ENCODE measurements at regions of chr22 and their contacts with region 1.

Region 1: DNA sequence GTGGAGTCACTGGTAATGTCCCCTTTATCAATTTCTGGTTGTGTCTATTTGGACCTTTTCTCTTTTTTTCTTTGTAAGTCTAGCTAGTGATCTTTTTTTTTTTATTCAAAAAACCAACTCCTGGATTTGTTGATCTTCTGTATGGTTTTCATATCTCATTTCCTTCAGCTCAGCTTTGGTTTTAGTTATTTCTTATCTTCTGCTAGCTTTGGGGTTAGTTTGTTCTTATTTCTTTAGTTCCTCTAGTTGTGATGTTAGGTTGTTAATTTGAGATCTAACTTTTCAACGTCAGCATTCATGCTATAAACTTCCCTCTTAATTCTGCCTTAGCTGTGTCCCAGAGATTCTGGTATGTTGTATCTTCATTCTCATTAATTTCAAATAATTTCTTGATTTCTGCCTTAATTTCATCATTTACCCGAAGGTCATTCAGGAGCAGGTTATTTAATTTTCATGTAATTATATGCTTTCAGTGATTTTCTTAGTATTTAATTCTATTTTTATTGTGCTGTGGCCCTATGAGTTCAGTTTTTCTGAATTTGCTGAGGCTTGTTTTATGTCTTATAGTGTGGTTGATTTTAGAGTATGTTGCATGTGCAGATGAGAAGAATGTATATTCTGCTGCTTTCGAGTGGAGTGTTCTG is 29.0 kb downstream of the PI4KA start:
- DNase-seq: no peak
- ATAC-seq: no peak

Region 2: DNA sequence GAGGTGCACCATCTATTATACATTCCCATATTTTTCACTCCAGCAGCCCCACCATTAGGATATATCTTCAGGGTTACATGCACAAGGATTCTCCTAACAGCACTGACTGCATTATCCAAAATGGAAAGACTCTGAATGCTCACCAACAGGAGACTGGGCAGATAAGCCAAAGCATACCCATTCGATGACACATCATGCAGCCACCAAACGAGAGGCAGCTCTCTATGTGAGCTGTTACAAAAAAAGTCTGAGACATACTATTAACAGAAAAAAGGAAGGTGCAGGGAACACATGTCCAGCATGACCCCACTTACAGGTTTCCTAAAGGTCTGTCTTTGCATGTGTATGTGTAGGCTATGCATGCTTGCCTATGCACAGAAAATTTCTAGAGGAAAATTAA is 68.1 kb before region 1 on chr22:
- intact Hi-C with region 1: loop called in 1 of 2 experiments (anchors 10 kb)
- DNase-seq: no peak
- ATAC-seq: peak in 1 of 2 donors; percentile 32

Region 3: GRCh38 chr22:20885557-20886323 is 56.1 kb after region 1 on chr22:
- intact Hi-C with region 1: no loop called
- DNase-seq: peak; percentile 86
- ATAC-seq: peak; percentile 96 to 97

Measured in left cardiac atrium (tissue), 4 donors.